CD4-positive, alpha-beta T cell (primary cell): ENCODE measurements at regions of chr2 and their contacts with region 1.

Region 1: DNA sequence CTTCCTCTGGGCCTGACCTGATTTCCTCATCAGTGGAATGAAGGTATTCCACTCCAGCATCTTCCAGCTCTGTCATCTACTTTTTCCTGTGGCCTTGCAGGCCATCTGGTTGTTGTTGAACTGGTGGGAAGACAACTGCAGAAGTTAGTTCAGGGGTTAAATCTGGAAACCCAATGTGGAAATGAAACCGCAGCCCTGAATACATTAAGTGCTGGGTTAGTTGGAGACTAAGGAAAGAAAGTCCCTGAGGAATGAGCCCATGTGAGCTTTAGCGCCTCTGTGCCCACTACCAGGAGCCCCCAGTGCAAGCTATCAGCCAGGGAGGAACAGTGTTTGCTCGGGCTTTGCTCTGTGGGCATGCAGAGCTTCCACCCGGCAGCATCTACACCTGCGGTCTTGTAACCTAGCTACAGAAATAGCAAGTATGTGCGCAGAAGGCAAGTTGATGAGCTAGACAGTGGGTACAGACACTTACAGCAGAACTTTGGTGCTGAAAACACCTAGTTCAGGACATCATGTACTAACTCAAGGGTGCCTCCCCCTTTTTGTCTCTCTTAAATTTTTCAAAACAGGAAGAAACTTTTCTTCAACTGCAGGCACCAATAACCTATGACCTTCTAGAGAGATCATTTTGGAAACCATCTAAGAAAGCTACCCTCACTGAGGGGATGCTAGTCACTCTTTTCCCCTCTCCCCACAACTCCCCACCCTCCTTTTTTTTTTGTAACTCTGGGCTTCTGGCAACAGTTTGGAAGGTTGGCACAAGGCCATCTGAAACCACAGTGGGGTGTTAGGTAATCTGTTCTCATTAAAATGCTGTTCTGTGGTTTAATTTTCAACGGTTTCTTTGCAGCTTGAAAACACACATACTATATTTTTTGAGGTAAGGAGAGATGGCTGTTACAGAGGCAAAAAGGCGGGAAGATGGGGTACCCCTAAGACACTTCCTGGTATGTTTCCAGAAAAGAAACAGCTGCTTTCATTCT is 18.3 kb upstream of the CXCR4 start:
- DNase-seq: peak; percentile 71 to 97 (median 78)
- ATAC-seq: peak; percentile 61
- H3K4me3 ChIP-seq: peak overlapping the region; percentile 27
- H3K4me3 Mint-ChIP-seq: peak overlapping the region; percentile 51
- H3K27ac ChIP-seq: peak overlapping the region; percentile 94 to 99
- H3K27ac Mint-ChIP-seq: peak overlapping the region; percentile 97
- H3K4me1 ChIP-seq: peaks cover 94% of the 10 kb centered on the region
- H3K4me1 Mint-ChIP-seq: peaks cover 96% of the 10 kb centered on the region
- H3K27me3 ChIP-seq: no peaks in the 10 kb centered on the region
- H3K27me3 Mint-ChIP-seq: no peaks in the 10 kb centered on the region
- CTCF ChIP-seq: no peak

Region 2: GRCh38 chr2:135052042-135052876 is 1084.0 kb before region 1 on chr2 and contains the start of gene RAB3GAP1:
- CTCF ChIA-PET with region 1: no interaction called
- POLR2A ChIA-PET with region 1: no interaction called
- intact Hi-C with region 1: loop called in 1 of 2 experiments (anchors 5 kb)
- DNase-seq: peak; percentile 79 to 98 (median 89)
- ATAC-seq: peak; percentile 82
- H3K4me3 ChIP-seq: peak within 1 kb of the TSS; percentile 66
- H3K4me3 Mint-ChIP-seq: peak within 1 kb of the TSS; percentile 97
- H3K27ac ChIP-seq: peak within 1 kb of the TSS; percentile 96
- H3K27ac Mint-ChIP-seq: peak within 1 kb of the TSS; percentile 99
- H3K4me1 ChIP-seq: peaks cover 18% of the 10 kb centered on the region
- H3K4me1 Mint-ChIP-seq: peaks cover 38% of the 10 kb centered on the region
- H3K27me3 ChIP-seq: no peaks in the 10 kb centered on the region
- H3K27me3 Mint-ChIP-seq: no peaks in the 10 kb centered on the region
- CTCF ChIP-seq: no peak
- total RNA-seq, gene RAB3GAP1: 35.9 to 37.0 TPM

Region 3: DNA sequence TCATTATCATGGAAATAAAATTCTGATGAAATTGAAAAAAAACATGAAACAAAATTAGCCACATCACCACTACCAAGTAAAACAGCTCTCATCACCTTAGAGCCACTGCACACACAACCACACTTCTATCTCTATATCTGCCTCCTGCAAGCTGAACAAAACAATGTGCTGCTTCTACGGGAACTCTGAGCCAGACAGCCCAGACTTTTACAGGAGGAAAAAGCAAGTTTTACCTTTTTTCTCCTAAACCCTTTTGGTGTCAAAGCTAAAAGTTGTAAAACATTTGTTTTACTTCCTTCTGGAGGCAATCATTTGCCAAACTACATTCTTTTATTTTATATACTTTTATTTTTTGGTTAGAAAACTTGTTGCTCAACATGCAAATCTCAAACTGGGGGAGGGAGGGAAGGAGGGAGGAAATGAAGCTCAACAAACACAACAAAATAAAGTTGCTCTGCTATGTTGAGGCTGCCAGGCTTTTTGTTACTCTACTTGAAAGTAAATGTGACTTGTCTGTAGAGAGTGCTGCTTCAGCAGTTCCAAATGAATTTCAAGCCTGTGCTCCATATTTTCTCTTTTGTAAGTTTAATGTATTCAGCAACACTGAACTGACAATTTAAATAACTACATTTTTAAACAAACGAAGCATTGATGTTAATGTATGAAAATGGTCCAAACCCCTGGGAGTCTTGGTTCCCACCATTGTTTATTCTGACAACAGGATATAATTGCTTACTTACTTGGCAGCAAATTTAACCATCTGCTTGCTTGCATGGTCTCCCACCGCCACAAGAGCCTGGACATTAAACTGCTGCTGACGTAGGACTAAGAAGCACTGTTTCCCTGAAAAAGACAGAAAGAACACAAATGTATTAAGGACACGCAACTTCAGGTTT is 175.3 kb before region 1 on chr2:
- CTCF ChIA-PET with region 1: no interaction called
- POLR2A ChIA-PET with region 1: interaction called, 11 read pairs
- intact Hi-C with region 1: no loop called
- DNase-seq: peak in 8 of 14 experiments; percentile 7 to 61 (median 28)
- ATAC-seq: peak; percentile 81
- H3K4me3 ChIP-seq: peak overlapping the region; percentile 6
- H3K4me3 Mint-ChIP-seq: peak overlapping the region; percentile 65
- H3K27ac ChIP-seq: peak overlapping the region; percentile 56 to 58
- H3K27ac Mint-ChIP-seq: peak overlapping the region; percentile 92
- H3K4me1 ChIP-seq: peaks cover 18% of the 10 kb centered on the region
- H3K4me1 Mint-ChIP-seq: peaks cover 63% of the 10 kb centered on the region
- H3K27me3 ChIP-seq: no peaks in the 10 kb centered on the region
- H3K27me3 Mint-ChIP-seq: no peaks in the 10 kb centered on the region
- CTCF ChIP-seq: no peak

Region 4: GRCh38 chr2:136212423-136213378 is 76.5 kb after region 1 on chr2:
- CTCF ChIA-PET with region 1: interaction called, 4 read pairs
- POLR2A ChIA-PET with region 1: interaction called, 9 read pairs
- intact Hi-C with region 1: loop called in 1 of 2 experiments (anchors 2 kb)
- DNase-seq: peak in 9 of 14 experiments; percentile 9 to 80 (median 19)
- ATAC-seq: peak; percentile 87
- H3K4me3 ChIP-seq: no peak overlapping the region
- H3K4me3 Mint-ChIP-seq: no peak overlapping the region
- H3K27ac ChIP-seq: peak overlapping the region; percentile 41 to 46
- H3K27ac Mint-ChIP-seq: peak overlapping the region; percentile 81
- H3K4me1 ChIP-seq: peaks cover 28% of the 10 kb centered on the region
- H3K4me1 Mint-ChIP-seq: peaks cover 46% of the 10 kb centered on the region
- H3K27me3 ChIP-seq: no peaks in the 10 kb centered on the region
- H3K27me3 Mint-ChIP-seq: no peaks in the 10 kb centered on the region
- CTCF ChIP-seq: no peak

Region 5: DNA sequence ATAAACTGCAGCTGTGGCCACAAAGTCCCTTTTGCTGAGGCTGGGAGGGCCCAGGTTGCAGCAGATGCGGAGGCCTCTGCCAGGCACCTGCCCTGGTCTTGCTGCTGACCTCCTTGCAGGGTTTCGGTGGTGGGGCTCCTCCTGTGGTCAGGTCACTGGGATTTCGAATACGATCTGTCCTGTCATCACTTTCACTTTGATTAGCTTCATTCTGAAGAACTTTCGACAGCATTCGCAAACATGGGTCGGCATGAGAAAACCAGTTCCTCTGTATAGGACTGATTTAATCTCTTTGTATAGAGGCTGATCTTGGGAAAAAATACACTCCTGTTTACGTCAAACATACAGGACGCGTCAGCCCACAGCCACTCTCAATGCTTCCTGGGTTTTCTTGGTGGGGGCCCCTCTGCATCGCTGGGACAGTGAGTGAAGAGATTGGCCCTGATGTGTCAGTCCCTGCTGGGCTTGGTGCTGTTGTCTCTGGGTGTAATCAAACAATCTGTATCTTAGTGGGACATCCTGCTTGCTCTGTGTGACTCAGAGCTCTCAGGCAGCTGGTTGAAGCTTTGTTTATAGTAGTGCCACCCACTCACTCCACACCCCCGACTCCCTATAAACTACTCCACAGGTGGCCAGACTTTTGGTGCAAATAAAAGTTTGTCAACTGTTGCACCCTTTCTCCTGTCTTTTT is 191.1 kb after region 1 on chr2:
- CTCF ChIA-PET with region 1: interaction called, 7 read pairs
- POLR2A ChIA-PET with region 1: interaction called, 40 read pairs
- intact Hi-C with region 1: loop called in 1 of 2 experiments (anchors 1 kb)
- DNase-seq: peak; percentile 64 to 93 (median 78)
- ATAC-seq: peak; percentile 92
- H3K4me3 ChIP-seq: peak overlapping the region; percentile 44
- H3K4me3 Mint-ChIP-seq: peak overlapping the region; percentile 79
- H3K27ac ChIP-seq: peak overlapping the region; percentile 74 to 90
- H3K27ac Mint-ChIP-seq: peak overlapping the region; percentile 90
- H3K4me1 ChIP-seq: peaks cover 54% of the 10 kb centered on the region
- H3K4me1 Mint-ChIP-seq: peaks cover 64% of the 10 kb centered on the region
- H3K27me3 ChIP-seq: no peaks in the 10 kb centered on the region
- H3K27me3 Mint-ChIP-seq: no peaks in the 10 kb centered on the region
- CTCF ChIP-seq: no peak

Region 6: GRCh38 chr2:136384531-136385303 is 248.5 kb after region 1 on chr2:
- CTCF ChIA-PET with region 1: interaction called, 15 read pairs
- POLR2A ChIA-PET with region 1: interaction called, 15 read pairs
- intact Hi-C with region 1: no loop called
- DNase-seq: peak; percentile 27 to 83 (median 46)
- ATAC-seq: peak; percentile 57
- H3K4me3 ChIP-seq: no peak overlapping the region
- H3K4me3 Mint-ChIP-seq: no peak overlapping the region
- H3K27ac ChIP-seq: no peak overlapping the region
- H3K27ac Mint-ChIP-seq: peak overlapping the region; percentile 79
- H3K4me1 ChIP-seq: peaks cover 24% of the 10 kb centered on the region
- H3K4me1 Mint-ChIP-seq: peaks cover 37% of the 10 kb centered on the region
- H3K27me3 ChIP-seq: no peaks in the 10 kb centered on the region
- H3K27me3 Mint-ChIP-seq: no peaks in the 10 kb centered on the region
- CTCF ChIP-seq: peak; percentile 67